ENCODE measurements at regions of chr2 and their contacts with region 1.

Region 1: GRCh38 chr2:159742846-159743245 is 30.5 kb downstream of the MARCHF7 start:
- DNase-seq: no peak
- ATAC-seq: no peak
- H3K4me3 ChIP-seq: no peak overlapping the region
- H3K27ac ChIP-seq: no peak overlapping the region
- H3K4me1 ChIP-seq: peaks cover 5% of the 10 kb centered on the region
- H3K27me3 ChIP-seq: no peaks in the 10 kb centered on the region
- CTCF ChIP-seq: no peak

Region 2: GRCh38 chr2:158713523-158714138 is 1029.2 kb before region 1 on chr2:
- intact Hi-C with region 1: no loop called
- DNase-seq: no peak
- ATAC-seq: no peak
- H3K4me3 ChIP-seq: no peak overlapping the region
- H3K27ac ChIP-seq: no peak overlapping the region
- H3K4me1 ChIP-seq: no peaks in the 10 kb centered on the region
- H3K27me3 ChIP-seq: no peaks in the 10 kb centered on the region
- CTCF ChIP-seq: no peak

Region 3: DNA sequence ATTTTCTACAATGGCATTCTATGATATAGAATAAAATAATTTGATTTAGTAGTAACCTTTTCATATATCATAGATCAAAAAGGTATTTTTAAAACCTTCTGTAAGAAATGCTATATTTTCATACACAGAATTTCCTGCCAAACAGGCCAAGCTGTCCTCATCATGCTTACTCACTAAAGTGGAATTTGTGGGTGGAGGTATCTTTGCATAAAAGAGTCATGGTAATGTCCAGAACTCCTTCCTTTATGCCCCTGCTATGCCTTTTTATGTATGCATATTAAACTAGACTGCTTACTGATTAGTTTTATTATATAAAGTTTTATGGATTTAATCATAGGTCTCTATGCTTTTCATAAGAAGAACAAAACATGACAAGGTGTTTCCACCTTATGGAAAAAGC is 58.0 kb before region 1 on chr2:
- intact Hi-C with region 1: loop called in 1 of 2 experiments (anchors 1 kb)
- DNase-seq: no peak
- ATAC-seq: no peak
- H3K4me3 ChIP-seq: no peak overlapping the region
- H3K27ac ChIP-seq: no peak overlapping the region
- H3K4me1 ChIP-seq: no peaks in the 10 kb centered on the region
- H3K27me3 ChIP-seq: no peaks in the 10 kb centered on the region
- CTCF ChIP-seq: no peak

Region 4: DNA sequence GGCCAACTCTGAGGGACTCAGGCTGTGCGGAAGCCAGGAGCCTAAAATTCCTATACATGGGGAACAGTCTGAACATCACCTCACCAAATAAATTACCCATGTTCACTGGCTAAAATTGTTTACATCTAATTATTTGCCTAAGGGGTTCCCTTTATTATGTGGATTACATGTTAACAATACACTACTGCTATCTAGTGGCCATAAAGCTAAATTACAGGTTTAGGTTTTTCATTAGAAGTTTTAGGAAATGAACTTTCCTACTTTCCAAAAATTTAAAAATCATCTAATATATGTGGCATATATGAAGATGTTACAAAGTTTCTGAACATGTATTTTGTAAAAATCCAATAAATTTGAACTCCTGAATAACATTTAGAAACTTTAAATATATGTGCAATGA is 279.3 kb after region 1 on chr2:
- intact Hi-C with region 1: no loop called
- DNase-seq: no peak
- ATAC-seq: no peak
- H3K4me3 ChIP-seq: no peak overlapping the region
- H3K27ac ChIP-seq: no peak overlapping the region
- H3K4me1 ChIP-seq: no peaks in the 10 kb centered on the region
- H3K27me3 ChIP-seq: no peaks in the 10 kb centered on the region
- CTCF ChIP-seq: peak; percentile 15

Measured in psoas muscle (tissue), 8 donors.